Colonic mucosa (tissue), 4 donors: ENCODE measurements at regions of chr17 and their contacts with region 1.

Region 1: GRCh38 chr17:42609182-42609813 is at the starts of genes RETREG3 and TUBG1:
- DNase-seq: peak; percentile 99
- H3K4me3 ChIP-seq: peak within 1 kb of the TSS; percentile 82
- H3K27ac ChIP-seq: peak within 1 kb of the TSS; percentile 95
- H3K4me1 ChIP-seq: peaks cover 9% of the 10 kb centered on the region
- H3K27me3 ChIP-seq: no peaks in the 10 kb centered on the region
- CTCF ChIP-seq: no peak
- total RNA-seq, gene RETREG3: 49.2 to 60.3 TPM
- total RNA-seq, gene TUBG1: 32.3 to 86.9 TPM

Region 2: DNA sequence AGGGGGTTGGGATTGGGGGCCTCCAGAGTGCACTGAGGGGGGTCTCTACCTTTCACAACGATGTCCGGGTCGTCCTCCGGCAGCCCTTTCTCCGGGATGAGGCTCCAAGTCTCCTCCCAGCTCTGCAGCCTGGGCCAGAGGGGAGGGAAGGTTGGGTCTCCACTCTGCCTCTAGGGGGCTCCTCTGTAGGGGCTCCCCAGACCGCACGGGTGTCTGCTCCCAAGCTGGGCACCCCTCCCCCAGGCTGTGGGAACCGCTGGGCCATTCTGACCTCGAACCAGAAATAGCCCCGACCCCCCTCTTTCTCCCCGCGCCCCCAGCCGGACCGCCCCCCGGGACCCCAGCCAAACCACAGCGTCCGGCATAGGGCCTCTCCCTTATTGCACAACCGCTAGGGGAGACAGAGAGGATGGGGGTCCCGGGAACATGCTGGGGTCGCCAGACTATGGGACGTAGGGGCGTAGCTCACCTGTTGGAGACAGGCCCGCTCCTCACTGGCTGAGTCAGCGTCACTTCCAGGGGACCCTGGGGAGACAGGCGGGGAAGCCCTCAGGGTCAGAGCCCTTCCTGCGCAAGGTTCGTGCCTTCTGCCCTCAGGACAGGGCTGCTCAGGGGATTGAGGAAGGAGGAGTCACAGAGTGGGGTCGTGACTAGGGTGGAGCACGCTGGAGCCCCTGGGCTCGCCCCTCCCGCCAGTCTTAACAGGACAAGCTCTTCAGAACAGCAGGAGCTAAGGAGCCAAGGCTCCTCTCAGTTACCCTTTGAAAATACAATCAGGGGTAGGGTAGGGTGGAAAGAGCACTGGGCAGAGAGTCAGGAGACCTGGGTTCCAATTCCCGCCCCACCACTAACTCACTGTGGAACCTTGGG is 64.8 kb after region 1 on chr17:
- intact Hi-C with region 1: loop called (anchors 5 kb)
- DNase-seq: peak; percentile 57
- H3K4me3 ChIP-seq: peak overlapping the region; percentile 17
- H3K27ac ChIP-seq: no peak overlapping the region
- H3K4me1 ChIP-seq: peaks cover 24% of the 10 kb centered on the region
- H3K27me3 ChIP-seq: no peaks in the 10 kb centered on the region
- CTCF ChIP-seq: peak; percentile 19